RWPE1 (cell line): ENCODE measurements at regions of chr5 and their contacts with region 1.

Region 1: GRCh38 chr5:132007399-132008165 is 3.9 kb downstream of the ACSL6 start:
- DNase-seq: peak; percentile 75
- H3K27ac ChIP-seq: no peak overlapping the region
- CTCF ChIP-seq: peak; percentile 73

Region 2: DNA sequence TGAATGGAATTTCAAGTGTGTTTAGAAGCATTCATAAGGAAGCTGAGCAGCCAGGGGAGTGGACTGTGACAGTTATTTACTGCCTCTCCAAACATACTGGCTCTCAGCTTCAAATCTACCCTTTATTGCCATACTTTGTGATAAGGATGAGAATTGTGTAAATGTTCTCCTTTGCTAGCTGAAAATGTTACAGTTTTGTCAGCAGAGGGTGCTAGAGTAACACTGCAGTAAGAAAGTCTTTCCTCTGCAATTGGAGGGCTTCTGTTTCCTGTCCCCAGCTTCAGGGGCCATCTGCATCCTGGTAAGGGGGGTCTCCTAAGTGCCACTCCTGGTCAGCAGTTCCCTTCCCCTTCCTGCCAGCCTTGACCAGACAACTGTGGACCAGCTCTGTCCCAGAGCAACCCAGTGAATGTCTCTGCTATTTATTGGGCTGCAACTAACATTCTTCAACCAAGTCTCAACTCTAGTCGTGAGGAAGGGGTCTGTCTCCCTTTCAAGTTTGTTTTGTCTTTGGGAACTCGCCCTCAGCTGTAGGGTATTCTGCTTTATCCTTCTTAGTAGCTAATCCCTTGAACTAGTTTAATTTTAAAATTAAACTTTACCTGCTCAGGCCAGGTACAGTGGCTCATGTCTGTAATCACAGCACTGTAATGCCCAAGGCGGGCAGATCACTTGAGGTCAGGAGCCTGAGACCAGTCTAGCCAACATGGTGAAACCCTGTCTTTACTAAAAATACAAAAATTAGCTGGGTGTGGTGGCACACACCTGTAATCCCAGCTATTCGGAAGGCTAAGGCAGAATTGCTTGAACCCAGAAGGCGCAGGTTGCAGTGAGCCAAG is 417.9 kb before region 1 on chr5:
- CTCF ChIA-PET with region 1: interaction called, 35 read pairs
- POLR2A ChIA-PET with region 1: no interaction called
- DNase-seq: peak; percentile 59
- H3K27ac ChIP-seq: no peak overlapping the region
- CTCF ChIP-seq: peak; percentile 93

Region 3: DNA sequence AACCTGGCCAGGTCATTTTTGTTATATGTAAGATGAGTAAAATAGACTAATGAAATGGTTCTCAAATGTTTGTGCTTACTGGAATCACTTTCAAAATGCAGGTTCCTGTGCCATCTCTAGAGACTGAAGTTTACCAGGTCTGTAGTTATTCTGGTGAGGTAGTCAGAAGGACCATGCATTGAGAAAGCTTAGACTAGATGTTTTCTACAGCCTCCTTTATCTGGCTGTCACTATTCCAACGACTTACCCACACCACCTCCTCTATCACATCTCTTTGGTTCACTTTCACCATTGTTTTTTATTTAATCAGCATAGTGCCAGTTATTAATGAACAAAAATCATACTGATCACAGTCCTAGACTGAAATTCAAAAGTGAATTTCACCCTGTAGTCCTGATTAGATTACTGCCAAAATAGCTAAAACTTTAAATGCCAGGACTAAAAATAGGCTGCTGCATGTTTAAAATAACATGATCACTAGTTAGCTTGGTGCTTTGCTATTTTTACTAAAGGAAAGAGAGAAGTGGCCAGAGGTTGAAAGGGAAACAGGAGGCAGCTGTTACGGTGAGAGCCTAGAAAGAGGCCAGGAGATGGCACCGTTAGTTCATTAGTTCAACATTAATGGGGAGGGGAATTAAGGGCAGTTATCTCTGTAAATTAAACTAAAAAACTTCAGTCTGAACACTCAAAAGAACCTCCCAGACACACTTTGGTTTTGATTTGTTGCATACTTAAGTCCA is 196.9 kb before region 1 on chr5:
- CTCF ChIA-PET with region 1: interaction called, 15 read pairs
- POLR2A ChIA-PET with region 1: no interaction called
- DNase-seq: peak; percentile 36
- H3K27ac ChIP-seq: no peak overlapping the region
- CTCF ChIP-seq: no peak